Activated T-helper 1 cell treated with anti-CD3 and anti-CD28 coated beads, Interleukin-12 subunit alpha, Interleukin-12 subunit beta, Interleukin-2, Interleukin-4 antibody, amounts not matched to agents 30 ng/mL and 10 ng/mL and 1 ng/mL, durations not matched to agents 14 hours and 24 hours and 36 hours (primary cell): ENCODE measurements at regions of chr1 and their contacts with region 1.

Region 1: DNA sequence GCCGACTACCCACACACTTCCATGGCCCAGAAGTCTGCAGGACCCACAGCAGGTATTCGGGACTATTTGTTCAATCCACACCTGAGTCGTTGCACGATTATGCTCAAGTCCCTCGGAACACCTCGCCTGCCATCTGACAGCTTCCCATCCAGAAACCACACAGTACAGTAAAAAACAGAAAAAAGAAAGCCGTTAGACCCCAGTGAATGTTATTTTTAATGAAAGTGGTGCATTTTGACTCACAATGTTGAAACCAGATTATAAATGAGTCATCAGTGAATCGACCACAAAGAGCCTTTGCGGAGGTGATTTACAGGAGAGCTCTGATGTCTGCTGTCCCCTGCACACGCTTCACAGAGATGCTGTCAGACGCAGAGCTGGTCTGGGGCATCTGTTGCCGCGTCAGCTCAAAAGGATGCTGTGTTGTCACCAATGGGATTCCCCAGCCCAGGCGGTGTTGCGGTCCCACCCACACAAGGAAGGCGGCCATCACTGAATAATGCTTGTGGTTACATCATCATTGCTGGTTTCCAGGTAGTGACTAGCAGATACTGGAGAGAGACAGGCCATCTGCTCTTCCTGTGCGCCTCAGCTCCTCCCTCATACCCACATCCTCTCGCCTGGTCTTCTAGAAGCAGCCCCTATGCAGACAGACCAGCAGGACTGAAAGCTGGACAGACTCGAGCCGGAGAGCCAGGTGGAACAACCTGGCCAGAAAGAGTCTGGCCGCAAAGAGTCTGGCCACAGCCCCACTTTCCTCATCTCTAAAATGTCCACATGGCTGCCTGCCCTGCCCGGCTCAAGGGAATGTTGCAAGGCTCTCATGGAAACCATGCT is 116.8 kb downstream of the TOMM20 start:
- DNase-seq: peak; percentile 97
- H3K4me3 Mint-ChIP-seq: peak overlapping the region; percentile 40
- H3K27ac Mint-ChIP-seq: peak overlapping the region; percentile 95
- H3K4me1 Mint-ChIP-seq: peaks cover 88% of the 10 kb centered on the region
- H3K27me3 Mint-ChIP-seq: peaks cover 5% of the 10 kb centered on the region

Region 2: DNA sequence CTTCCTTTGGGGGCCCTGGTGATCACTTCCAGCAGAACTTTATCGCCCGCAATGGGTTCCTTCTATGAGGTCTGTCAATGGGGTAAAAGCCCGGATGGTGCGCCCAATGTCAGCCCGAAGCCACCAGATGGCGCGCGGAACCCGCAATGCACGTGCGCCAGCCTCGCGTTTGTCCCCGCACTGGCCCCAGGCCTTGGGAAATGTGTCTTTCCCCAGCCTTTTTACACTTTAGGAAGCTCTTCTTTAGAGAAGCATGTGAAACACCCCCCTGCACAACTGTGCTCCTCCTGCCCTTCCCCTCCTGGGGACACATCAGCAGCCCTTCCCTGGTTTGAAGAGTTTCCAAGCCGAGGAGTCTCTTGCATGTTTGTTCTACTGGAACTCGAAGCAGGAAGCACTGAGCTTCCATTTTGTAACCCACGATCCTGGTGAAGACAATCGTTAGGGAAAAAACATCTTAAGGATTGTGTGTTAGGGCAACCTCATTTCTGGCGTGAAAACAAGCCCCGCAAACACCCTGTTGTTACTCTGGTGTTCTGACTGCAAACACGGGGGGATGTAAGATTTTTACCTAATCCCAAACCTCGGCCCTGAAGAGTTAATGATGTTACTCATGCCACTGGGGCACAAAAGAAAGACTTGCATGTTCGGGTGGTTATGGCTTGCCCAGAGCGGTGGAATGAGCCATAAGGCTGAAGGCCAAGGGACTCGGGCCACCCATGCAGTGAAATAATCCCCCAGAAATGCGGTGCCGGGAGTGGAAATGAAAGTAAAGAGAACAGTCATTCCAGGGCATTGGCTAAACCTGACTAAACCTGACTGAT is 512.5 kb before region 1 on chr1:
- intact Hi-C with region 1: loop called (anchors 1 kb)
- DNase-seq: peak; percentile 78
- H3K4me3 Mint-ChIP-seq: no peak overlapping the region
- H3K27ac Mint-ChIP-seq: peak overlapping the region; percentile 80
- H3K4me1 Mint-ChIP-seq: peaks cover 83% of the 10 kb centered on the region
- H3K27me3 Mint-ChIP-seq: no peaks in the 10 kb centered on the region

Region 3: GRCh38 chr1:234772345-234773147 is 239.3 kb before region 1 on chr1:
- intact Hi-C with region 1: loop called (anchors 1 kb)
- DNase-seq: peak; percentile 83
- H3K4me3 Mint-ChIP-seq: peak overlapping the region; percentile 80
- H3K27ac Mint-ChIP-seq: peak overlapping the region; percentile 100
- H3K4me1 Mint-ChIP-seq: peaks cover 56% of the 10 kb centered on the region
- H3K27me3 Mint-ChIP-seq: no peaks in the 10 kb centered on the region

Region 4: GRCh38 chr1:234925440-234926263 is 86.2 kb before region 1 on chr1:
- intact Hi-C with region 1: loop called (anchors 1 kb)
- DNase-seq: peak; percentile 17
- H3K4me3 Mint-ChIP-seq: peak overlapping the region; percentile 74
- H3K27ac Mint-ChIP-seq: peak overlapping the region; percentile 97
- H3K4me1 Mint-ChIP-seq: peaks cover 64% of the 10 kb centered on the region
- H3K27me3 Mint-ChIP-seq: no peaks in the 10 kb centered on the region

Region 5: DNA sequence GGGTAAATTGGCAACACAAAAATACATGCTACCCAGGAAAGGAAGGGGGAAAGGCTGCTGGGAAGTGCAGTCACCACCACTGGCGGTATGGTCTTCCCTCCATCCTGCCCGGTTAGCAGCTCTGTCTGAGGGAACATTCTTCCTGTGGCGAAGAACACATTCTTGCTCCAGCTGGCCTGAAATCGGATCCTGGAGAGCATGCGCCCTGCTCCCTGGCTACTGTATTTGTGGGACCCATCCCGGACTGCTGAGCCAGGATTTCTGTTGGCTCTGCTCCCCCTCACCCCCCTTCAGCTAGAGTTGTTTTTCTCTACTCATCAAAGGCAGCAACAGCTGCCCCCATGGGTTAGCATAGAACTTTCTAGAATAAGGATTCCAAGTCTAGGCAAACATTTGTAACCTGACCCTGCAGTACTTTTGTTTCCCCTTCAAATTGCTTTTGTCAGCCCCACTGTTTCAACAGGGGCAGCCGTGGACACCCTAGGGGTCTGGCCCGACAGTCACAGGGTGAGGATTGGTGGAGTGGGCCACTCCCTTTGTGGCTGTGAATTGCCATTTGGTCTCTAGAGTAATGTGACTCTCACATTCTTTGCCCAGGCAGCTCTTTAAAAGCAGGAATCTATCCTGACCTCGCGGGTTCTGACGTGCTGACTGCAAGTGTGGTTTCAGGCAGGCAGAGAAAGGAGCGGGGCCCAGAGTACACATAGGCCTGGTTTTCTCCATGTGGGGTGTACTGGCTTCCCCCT is 40.9 kb before region 1 on chr1:
- intact Hi-C with region 1: no loop called
- DNase-seq: no peak
- H3K4me3 Mint-ChIP-seq: peak overlapping the region; percentile 32
- H3K27ac Mint-ChIP-seq: peak overlapping the region; percentile 84
- H3K4me1 Mint-ChIP-seq: peaks cover 72% of the 10 kb centered on the region
- H3K27me3 Mint-ChIP-seq: no peaks in the 10 kb centered on the region

Region 6: GRCh38 chr1:234987415-234988154 is 24.2 kb before region 1 on chr1:
- intact Hi-C with region 1: loop called (anchors 1 kb)
- DNase-seq: no peak
- H3K4me3 Mint-ChIP-seq: peak overlapping the region; percentile 53
- H3K27ac Mint-ChIP-seq: peak overlapping the region; percentile 95
- H3K4me1 Mint-ChIP-seq: peaks cover 83% of the 10 kb centered on the region
- H3K27me3 Mint-ChIP-seq: no peaks in the 10 kb centered on the region

Region 7: DNA sequence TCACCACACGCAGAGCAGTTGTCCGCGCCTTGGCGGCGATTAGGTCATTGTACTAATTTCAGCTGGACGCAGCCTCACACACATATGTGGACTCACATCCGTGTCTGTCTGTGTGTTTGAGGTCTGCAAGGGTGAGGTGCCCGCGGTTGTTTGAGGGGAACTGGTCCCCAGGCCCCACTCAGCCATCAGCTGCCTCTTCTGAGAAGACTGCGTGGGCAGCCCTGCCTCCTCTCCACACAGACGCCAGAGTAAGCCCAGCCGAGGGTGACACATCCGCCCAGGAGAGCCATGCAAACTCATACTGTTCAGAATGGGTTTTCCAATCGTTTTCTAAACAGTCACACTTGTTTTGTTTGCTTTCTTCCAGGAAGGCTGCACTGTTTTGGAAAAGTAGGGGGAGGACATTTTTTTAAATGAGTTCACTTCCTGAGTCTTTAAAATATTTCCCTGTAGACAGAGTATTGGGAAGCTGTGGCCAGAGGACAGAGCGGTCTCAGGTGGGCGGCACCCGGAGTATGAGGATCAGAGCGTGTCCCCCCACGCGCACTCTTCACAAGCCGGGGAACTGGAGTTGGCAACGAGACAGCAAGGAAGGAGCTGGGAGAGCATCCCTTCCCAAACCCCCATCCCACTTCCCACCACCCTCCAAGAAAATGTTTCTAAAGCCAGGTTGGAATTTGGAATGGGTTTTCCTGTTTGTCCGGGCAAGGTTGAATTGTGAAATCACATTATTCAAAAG is 63.5 kb after region 1 on chr1:
- intact Hi-C with region 1: loop called (anchors 1 kb)
- DNase-seq: peak; percentile 34
- H3K4me3 Mint-ChIP-seq: peak overlapping the region; percentile 71
- H3K27ac Mint-ChIP-seq: peak overlapping the region; percentile 99
- H3K4me1 Mint-ChIP-seq: peaks cover 42% of the 10 kb centered on the region
- H3K27me3 Mint-ChIP-seq: no peaks in the 10 kb centered on the region